Right ventricle myocardium inferior (tissue), 1 donor: ENCODE measurements at regions of chr18 and their contacts with region 1.

Region 1: GRCh38 chr18:3447895-3448837 is 1.8 kb upstream of the TGIF1 start:
- DNase-seq: peak; percentile 96
- ATAC-seq: peak; percentile 86

Region 2: DNA sequence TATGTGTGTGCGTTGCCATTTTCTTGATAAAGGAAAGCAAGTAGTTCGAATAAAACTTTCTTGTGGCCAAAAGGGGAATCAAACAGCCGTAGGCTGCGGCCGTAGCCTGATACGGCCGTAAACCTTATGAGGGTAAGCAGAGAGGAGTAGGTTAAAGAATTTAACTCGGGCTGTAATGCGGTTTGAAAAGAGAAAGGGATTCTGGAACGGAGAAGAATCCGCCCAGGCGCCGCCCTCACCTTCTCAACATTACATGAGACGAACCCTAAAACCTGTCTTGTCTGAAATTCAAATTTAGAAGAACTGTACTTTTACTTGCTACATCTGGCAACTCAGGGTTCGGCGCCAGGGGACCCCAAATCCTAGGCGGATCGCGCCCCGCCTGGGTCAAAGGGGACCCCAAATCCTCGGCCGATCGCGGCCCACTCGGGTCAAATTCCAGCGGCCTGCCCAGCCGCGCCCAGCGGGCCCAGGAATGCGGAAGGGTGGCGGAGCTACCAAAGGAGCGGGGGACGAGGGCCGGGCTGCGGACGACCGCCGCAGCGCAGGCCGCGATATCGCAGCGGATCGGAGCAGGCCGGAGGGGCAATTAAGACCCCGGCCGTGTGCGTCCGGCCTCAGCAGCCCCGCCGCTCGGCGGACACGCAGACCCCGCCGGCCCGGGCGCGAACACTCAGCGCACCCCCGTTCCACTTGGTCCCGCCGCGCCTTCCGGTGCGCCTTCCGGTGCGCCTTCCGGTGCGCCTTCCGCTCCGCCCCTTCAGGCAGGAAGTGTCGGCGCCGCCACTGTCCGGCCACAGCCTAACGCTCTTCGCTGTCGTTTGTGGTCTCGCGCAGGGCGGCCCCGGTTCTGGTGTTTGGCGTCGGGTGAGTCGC is 186.6 kb before region 1 on chr18 and contains the start of gene MYL12B:
- intact Hi-C with region 1: no loop called
- DNase-seq: peak; percentile 94
- ATAC-seq: peak; percentile 93
- total RNA-seq, gene MYL12B: 180 TPM

Region 3: DNA sequence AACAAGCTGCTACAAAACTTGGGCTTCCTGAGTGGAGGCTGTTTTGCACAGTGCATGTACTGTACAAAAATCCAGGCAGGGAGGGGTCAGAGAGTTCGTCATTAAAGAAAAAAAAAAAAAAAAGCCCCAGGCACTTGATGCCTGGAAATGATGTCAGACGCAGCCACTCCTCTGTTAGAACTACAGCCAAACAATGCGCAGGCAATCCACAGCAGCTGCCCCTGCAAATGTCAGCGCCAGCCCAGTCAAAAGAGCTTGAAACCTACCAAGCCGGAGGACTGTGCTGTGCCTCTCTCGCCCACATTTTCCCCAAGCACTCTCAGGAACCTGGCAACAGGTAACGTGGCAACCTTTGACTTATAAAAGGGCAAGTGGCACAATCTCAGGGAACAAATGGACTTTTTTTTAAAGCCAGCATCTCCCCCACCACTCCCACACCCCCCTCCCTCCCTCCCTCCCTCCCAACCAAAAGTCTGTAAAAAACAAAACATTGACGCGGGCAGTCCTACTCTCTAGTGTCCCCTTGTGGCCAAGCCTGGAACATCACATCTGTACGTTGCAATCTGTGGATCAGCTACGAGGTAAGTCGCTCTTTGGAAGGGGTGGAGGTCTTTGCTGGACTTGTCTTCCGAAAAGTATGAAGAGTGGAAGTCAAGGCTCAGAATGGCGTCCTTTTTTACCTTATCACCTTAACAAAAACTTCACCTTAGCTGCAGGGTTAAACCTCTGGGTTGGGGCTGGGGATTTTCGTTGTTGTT is 145.9 kb after region 1 on chr18:
- intact Hi-C with region 1: loop called (anchors 2 kb)
- DNase-seq: peak; percentile 85
- ATAC-seq: peak; percentile 92

Region 4: GRCh38 chr18:3665780-3666525 is 217.8 kb after region 1 on chr18:
- intact Hi-C with region 1: loop called (anchors 5 kb)
- DNase-seq: peak; percentile 76
- ATAC-seq: peak; percentile 92

Region 5: DNA sequence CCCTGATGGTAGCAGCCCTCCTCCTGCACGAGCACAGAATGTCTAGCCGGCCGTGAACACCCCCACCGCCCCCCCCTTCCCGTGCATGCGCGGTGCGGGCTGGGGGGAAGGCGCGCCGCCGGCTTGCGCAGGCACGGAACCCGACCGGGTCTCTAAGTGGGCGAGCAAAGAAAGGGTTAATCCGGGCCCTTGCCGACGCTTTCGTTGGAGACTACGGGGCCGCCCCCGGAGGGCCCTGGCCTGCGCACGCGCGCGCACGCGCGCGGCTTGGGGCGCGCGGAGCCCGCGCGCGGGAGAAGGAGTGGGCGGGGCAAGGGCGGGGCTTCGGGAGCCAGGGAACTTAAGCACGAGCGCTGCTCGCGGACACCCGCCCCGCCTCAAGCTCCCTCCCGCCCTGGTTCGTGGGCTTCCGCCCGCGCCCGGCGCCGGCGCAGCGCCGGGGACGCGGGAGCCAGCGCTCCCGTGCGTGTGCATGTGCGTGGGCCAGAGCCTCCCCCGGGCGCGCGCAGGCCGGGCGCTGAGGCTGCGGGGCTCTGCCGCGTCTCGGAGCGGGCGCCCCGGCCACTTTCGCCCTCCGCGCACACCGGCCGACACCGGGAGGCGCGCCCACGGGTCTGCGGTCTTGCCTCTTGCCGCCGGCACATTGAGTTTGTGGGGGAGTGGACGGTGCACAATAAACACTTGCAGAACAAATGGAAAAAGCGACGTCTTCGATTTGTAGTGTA is 1848.0 kb after region 1 on chr18:
- intact Hi-C with region 1: loop called (anchors 10 kb)
- DNase-seq: peak; percentile 98
- ATAC-seq: peak; percentile 94